ENCODE measurements at regions of chr20 and their contacts with region 1.

Region 1: GRCh38 chr20:16615199-16615598 is 42.0 kb upstream of the KIF16B start:
- DNase-seq: no peak
- ATAC-seq: no peak
- H3K4me3 ChIP-seq: no peak overlapping the region
- H3K27ac ChIP-seq: no peak overlapping the region
- H3K4me1 ChIP-seq: no peaks in the 10 kb centered on the region
- H3K27me3 ChIP-seq: no peaks in the 10 kb centered on the region; the same call in 1 of the 2 replicates
- CTCF ChIP-seq: no peak

Region 2: DNA sequence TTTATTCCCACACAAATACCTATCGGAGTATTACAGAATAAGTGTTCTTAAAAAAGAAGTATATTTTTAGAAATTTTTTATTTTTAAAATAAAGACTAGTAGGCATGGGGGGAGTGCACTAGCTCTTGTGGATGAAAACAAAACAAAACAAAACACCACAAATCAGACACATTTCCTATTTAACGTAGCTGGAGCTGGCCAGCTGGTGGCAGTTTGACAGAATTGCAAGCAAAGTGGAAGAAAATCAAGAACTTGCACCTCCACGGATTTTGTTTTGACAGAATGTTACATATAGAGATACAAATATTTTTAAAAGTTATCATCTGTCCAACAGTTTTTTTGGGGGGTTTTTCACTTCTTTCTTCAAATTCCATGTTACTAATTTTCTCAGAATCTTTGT is 51.1 kb after region 1 on chr20:
- CTCF ChIA-PET with region 1: no interaction called
- POLR2A ChIA-PET with region 1: interaction called, 10 read pairs
- in situ Hi-C with region 1: no loop called
- intact Hi-C with region 1: no loop called
- DNase-seq: no peak
- ATAC-seq: no peak
- H3K4me3 ChIP-seq: no peak overlapping the region
- H3K27ac ChIP-seq: no peak overlapping the region
- H3K4me1 ChIP-seq: no peaks in the 10 kb centered on the region
- H3K27me3 ChIP-seq: no peaks in the 10 kb centered on the region; the same call in 1 of the 2 replicates
- CTCF ChIP-seq: peak; percentile 43; the same call in 1 of the 2 replicates